Activated naive CD8-positive, alpha-beta T cell treated with anti-CD3 and anti-CD28 coated beads, Interleukin-2, amount 10 ng/mL, durations not matched to agents 7 days and 5 days (primary cell): ENCODE measurements at regions of chr1 and their contacts with region 1.

Region 1: GRCh38 chr1:32291708-32292492 is at the start of gene HDAC1:
- DNase-seq: peak; percentile 96
- ATAC-seq: peak; percentile 99
- H3K4me3 Mint-ChIP-seq: peak within 1 kb of the TSS; percentile 100
- H3K27ac Mint-ChIP-seq: peak within 1 kb of the TSS; percentile 87
- H3K4me1 Mint-ChIP-seq: peaks cover 29% of the 10 kb centered on the region
- H3K27me3 Mint-ChIP-seq: no peaks in the 10 kb centered on the region
- total RNA-seq, gene HDAC1: 195 to 197 TPM

Region 2: DNA sequence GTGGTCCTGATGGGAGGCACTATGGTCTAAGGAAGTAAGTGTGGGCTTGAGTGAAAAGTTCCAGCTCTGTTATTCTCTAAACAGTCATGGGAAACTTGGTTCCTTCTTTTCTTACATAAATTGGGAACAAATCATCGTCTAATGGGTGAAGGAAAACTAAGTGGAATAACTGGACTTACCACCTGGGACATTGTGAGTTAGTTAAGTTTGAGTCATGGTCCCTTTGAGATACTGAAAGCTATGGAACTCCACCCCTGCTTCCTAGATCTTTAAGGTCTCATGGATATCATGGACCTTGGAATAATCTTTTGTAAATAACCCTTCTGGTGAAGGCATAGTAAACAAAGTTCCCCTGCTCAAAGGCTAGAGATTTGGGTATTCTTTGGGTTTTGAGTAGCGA is 128.5 kb before region 1 on chr1:
- POLR2A ChIA-PET with region 1: no interaction called
- DNase-seq: no peak
- ATAC-seq: no peak
- H3K4me3 Mint-ChIP-seq: no peak overlapping the region
- H3K27ac Mint-ChIP-seq: no peak overlapping the region
- H3K4me1 Mint-ChIP-seq: peaks cover 2% of the 10 kb centered on the region
- H3K27me3 Mint-ChIP-seq: no peaks in the 10 kb centered on the region

Region 3: DNA sequence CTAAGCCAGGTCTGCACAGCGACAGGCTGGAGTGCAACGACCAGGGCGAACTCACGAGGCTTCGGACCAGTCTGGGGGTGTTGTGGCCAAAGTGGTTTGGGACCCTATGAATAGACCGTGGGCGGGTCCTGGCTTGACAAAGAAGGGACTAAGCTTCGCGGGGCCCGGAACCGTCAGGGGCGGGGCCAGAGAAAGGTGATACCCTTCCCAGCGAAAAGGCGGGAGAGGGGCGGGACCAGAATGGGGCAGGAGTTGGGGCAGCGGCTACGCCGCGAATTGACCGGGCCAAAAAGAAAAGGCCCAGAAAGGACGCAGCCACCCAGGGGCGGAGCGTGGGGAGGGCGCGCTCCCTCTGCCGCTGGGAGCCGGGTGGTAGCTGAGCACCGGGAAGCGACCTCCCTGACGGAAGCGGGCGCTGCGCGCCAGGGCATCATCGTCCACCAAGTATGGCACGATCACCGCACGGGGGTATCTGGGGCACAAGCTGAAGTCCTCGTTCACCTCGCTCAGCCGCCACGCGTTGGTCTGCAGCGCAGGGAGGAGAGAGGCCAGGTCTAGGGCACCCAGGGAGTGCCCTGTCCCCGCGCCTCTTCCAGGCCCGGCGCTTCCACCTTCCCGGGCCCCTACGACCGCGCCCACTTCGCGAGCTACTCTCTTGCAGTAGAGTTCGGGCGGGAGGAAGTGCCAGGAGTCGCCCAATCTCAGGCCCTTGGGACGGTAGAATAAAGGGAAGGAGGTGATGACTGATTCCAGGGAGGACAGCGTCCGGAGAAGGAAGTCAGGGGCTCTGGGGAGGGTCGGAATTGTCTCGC is 51.6 kb before region 1 on chr1:
- POLR2A ChIA-PET with region 1: interaction called, 11 read pairs
- DNase-seq: peak; percentile 66
- ATAC-seq: peak; percentile 59
- H3K4me3 Mint-ChIP-seq: peak overlapping the region; percentile 84
- H3K27ac Mint-ChIP-seq: peak overlapping the region; percentile 79
- H3K4me1 Mint-ChIP-seq: peaks cover 14% of the 10 kb centered on the region
- H3K27me3 Mint-ChIP-seq: no peaks in the 10 kb centered on the region

Region 4: DNA sequence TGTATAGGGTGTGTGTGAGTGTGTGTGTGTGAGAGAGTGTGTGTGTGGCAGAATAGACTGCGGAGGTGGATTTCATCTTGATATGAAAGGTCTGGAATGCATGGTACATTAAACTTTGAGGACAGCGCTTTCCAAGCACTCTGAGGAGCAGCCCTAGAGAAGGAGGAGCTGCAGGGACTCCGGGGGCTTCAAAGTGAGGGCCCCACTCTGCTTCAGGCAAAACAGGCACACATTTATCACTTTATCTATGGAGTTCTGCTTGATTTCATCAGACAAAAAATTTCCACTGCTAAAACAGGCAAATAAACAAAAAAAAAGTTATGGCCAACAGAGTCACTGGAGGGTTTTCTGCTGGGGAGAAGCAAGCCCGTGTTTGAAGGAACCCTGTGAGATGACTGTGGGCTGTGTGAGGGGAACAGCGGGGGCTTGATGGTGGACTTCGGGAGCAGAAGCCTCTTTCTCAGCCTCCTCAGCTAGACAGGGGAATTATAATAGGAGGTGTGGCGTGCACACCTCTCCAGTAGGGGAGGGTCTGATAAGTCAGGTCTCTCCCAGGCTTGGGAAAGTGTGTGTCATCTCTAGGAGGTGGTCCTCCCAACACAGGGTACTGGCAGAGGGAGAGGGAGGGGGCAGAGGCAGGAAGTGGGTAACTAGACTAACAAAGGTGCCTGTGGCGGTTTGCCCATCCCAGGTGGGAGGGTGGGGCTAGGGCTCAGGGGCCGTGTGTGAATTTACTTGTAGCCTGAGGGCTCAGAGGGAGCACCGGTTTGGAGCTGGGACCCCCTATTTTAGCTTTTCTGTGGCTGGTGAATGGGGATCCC is 18.3 kb before region 1 on chr1:
- POLR2A ChIA-PET with region 1: interaction called, 12 read pairs
- DNase-seq: peak; percentile 70
- ATAC-seq: peak; percentile 80
- H3K4me3 Mint-ChIP-seq: peak overlapping the region; percentile 83
- H3K27ac Mint-ChIP-seq: peak overlapping the region; percentile 91
- H3K4me1 Mint-ChIP-seq: peaks cover 56% of the 10 kb centered on the region
- H3K27me3 Mint-ChIP-seq: no peaks in the 10 kb centered on the region

Region 5: DNA sequence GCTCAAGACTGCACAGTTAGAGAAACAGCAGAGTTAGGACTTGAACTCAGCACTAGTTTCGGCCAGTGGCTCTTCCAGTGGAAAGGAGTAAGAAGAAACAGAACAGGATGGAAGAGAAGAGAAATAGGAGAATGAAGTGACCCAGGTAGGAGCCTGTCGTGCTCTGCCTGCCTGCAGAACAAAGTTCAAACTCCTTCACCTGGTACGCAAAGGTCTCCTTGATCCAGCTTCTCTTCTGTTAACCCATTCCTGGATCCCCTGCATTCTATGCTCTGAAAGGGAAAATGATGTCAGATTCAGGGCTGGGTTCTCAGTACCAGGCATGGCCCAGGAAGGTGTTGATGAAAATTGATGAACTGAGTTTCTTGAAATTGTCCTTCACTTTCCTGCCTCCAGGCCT is 66.5 kb after region 1 on chr1:
- POLR2A ChIA-PET with region 1: no interaction called
- DNase-seq: no peak
- ATAC-seq: no peak
- H3K4me3 Mint-ChIP-seq: no peak overlapping the region
- H3K27ac Mint-ChIP-seq: no peak overlapping the region
- H3K4me1 Mint-ChIP-seq: peaks cover 23% of the 10 kb centered on the region
- H3K27me3 Mint-ChIP-seq: peaks cover 7% of the 10 kb centered on the region